Sigmoid colon (tissue), 7 donors: ENCODE measurements at regions of chr14 and their contacts with region 1.

Region 1: DNA sequence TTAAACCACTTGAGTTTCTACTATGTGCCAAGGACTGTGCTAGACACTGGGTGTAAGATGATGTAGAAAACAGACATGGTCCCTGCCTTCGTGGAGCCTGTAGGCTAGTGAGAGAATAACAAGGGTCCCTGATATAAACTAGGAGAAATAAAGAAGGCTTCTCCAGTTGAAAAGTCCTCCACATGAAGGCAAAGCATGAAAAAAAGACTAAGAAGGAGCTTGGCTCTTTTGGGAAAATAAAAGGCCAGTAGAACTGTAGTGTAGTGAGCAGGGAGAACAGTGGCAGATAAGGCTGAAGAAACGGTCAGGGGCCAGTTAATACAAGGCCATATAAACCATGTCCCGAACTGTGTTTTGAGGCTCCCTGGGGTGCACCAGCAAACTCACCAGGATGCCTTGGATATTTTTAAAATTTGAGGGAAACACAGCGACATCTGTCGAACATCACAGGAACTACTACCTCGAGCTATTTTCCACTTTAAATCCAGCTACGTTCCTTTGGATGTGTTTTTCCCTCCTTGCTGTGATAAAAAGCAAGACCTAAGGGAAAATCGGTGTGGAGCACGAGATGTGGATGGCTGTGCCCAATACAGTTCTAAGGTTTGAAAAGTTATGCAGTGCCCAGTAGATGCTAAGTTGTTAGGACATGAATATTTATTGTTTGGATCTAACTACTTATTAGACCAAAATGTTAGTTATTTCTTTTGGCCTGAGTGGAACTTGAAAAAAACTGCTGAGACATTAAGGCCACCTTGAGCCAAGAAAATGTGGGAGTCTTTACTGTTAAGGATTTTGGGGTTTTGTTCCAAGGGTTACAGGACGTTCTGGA is 8.5 kb upstream of the CFL2 start:
- DNase-seq: peak; percentile 67
- H3K4me3 ChIP-seq: no peak overlapping the region
- H3K27ac ChIP-seq: peak overlapping the region in 1 of 4 donors; percentile 26
- H3K4me1 ChIP-seq: peaks cover 0 to 10% (median 7%) of the 10 kb centered on the region in 4 donors
- H3K27me3 ChIP-seq: no peaks in the 10 kb centered on the region
- CTCF ChIP-seq: peak; percentile 67 to 88 (median 78)
- EP300 ChIP-seq: no peak
- POLR2A ChIP-seq: no peak

Region 2: DNA sequence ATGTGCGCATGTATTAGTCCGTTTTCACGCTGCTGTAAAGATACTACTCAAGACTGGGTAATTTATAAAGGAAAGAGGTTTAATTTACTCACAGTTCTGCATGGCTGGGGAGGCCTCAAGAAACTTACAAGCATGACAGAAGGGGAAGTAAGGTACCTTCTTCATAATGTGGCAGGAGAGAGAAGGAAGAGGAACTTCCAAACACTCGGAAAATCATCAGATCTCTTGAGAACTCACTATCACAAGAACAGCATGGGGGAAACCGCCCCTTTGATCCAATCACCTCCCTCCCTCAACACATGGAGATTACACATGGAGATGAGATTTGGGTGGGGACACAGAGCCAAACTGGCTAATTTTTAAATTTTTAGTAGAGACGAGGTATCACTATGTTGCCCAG is 51.2 kb before region 1 on chr14:
- intact Hi-C with region 1: loop called (anchors 1 kb)
- DNase-seq: no peak
- H3K4me3 ChIP-seq: no peak overlapping the region
- H3K27ac ChIP-seq: no peak overlapping the region
- H3K4me1 ChIP-seq: no peaks in the 10 kb centered on the region
- H3K27me3 ChIP-seq: no peaks in the 10 kb centered on the region
- CTCF ChIP-seq: no peak
- EP300 ChIP-seq: no peak
- POLR2A ChIP-seq: no peak